ENCODE measurements at regions of chr3 and their contacts with region 1.

Region 1: GRCh38 chr3:102476236-102476635 is 41.4 kb downstream of the ZPLD1 start:
- DNase-seq: no peak
- CTCF ChIP-seq: no peak

Region 2: GRCh38 chr3:102454181-102454580 is 22.1 kb before region 1 on chr3:
- CTCF ChIA-PET with region 1: no interaction called
- POLR2A ChIA-PET with region 1: no interaction called
- DNase-seq: no peak
- CTCF ChIP-seq: no peak

Region 3: GRCh38 chr3:102464261-102464660 is 12.0 kb before region 1 on chr3:
- CTCF ChIA-PET with region 1: interaction called, 10 read pairs
- POLR2A ChIA-PET with region 1: no interaction called
- DNase-seq: no peak
- CTCF ChIP-seq: no peak

Measured in GM10248 (cell line).